ENCODE measurements at regions of chr10 and their contacts with region 1.

Region 1: DNA sequence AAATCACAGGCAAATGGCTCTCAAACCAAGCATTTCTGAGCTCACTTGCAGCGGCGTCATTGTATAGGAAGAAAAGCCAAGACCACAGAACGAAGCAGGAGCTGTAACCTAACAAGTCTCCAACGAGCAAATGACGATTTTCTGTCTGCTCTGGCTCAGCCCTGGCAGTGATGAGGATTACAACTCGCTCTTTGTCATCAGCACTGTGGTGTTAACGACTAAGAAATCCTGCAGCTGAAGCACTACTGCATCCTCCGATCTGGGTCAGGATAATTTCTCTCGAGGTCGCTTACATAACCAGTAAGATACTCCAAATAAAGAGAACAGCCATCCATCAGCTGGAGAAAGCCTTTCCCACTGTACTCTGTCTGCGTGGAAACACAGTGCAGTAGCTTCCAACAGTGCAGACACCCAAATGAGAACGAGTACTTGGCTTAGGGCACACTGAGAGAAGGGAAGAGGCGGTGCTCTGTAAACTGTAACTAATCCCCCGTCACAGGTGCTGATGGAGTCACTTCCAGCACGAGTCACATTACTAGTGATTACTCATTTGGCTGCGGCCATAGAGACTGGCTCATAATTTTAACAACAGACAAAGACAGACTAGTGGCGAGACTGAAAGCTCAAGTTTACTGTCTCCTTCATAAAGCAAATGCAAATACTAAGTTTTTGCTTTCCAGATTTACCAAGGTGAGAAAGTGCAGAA is 135.8 kb downstream of the NRBF2 start:
- DNase-seq: peak; percentile 81
- H3K4me3 Mint-ChIP-seq: peak overlapping the region; percentile 93
- H3K27ac Mint-ChIP-seq: peak overlapping the region; percentile 99
- H3K4me1 Mint-ChIP-seq: peaks cover 26% of the 10 kb centered on the region
- H3K27me3 Mint-ChIP-seq: no peaks in the 10 kb centered on the region
- CTCF ChIP-seq: no peak

Region 2: GRCh38 chr10:63236113-63236935 is 32.6 kb before region 1 on chr10:
- CTCF ChIA-PET with region 1: interaction called, 11 read pairs
- intact Hi-C with region 1: loop called (anchors 2 kb)
- DNase-seq: peak; percentile 39
- H3K4me3 Mint-ChIP-seq: no peak overlapping the region
- H3K27ac Mint-ChIP-seq: peak overlapping the region; percentile 60
- H3K4me1 Mint-ChIP-seq: peaks cover 30% of the 10 kb centered on the region
- H3K27me3 Mint-ChIP-seq: no peaks in the 10 kb centered on the region
- CTCF ChIP-seq: no peak

Region 3: GRCh38 chr10:63409465-63410027 is 140.6 kb after region 1 on chr10:
- CTCF ChIA-PET with region 1: no interaction called
- intact Hi-C with region 1: no loop called
- DNase-seq: no peak
- H3K4me3 Mint-ChIP-seq: no peak overlapping the region
- H3K27ac Mint-ChIP-seq: no peak overlapping the region
- H3K4me1 Mint-ChIP-seq: peaks cover 8% of the 10 kb centered on the region
- H3K27me3 Mint-ChIP-seq: no peaks in the 10 kb centered on the region
- CTCF ChIP-seq: no peak

Region 4: DNA sequence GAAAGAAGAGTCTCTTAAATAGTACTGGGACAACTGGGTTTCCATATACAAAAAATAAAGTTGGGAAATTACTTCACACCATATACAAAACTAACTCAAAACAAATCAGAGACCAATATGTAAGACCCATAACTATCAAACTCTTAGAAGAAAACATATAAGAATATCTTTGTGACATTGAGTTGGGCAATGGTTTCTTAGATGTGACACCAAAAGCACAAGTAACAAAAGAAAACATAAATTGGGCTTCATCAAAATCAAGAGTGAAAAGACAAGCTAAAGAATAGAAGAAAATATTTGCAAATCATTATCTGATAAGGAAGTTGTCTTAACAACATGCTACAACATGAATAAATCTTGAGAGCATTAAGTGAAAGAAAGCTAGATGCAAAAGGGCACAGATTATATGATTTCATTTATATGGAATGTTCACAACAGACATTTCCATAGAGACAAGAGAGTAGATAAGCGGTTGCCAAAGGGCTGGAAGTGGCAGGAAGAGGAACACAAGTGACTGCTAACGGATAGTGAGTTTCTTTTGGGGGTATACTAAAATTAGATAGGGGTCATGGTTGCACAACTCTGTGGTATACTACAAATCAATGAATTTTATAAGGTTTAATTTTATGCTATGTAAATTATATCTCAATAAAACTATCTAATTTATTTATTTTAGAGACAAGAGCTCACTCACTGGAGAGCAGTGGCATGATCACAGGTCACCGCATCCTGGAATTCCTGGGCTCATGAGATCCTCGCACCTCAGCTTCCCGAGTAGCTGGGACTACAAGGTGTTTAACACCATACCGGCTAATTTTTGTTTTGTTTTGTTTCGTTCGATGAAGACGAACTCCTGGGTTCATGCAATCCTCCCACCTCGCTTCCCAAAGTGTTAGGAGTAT is 161.4 kb after region 1 on chr10:
- CTCF ChIA-PET with region 1: no interaction called
- intact Hi-C with region 1: loop called (anchors 10 kb)
- DNase-seq: no peak
- H3K4me3 Mint-ChIP-seq: no peak overlapping the region
- H3K27ac Mint-ChIP-seq: peak overlapping the region; percentile 51
- H3K4me1 Mint-ChIP-seq: peaks cover 55% of the 10 kb centered on the region
- H3K27me3 Mint-ChIP-seq: no peaks in the 10 kb centered on the region
- CTCF ChIP-seq: no peak

Region 5: DNA sequence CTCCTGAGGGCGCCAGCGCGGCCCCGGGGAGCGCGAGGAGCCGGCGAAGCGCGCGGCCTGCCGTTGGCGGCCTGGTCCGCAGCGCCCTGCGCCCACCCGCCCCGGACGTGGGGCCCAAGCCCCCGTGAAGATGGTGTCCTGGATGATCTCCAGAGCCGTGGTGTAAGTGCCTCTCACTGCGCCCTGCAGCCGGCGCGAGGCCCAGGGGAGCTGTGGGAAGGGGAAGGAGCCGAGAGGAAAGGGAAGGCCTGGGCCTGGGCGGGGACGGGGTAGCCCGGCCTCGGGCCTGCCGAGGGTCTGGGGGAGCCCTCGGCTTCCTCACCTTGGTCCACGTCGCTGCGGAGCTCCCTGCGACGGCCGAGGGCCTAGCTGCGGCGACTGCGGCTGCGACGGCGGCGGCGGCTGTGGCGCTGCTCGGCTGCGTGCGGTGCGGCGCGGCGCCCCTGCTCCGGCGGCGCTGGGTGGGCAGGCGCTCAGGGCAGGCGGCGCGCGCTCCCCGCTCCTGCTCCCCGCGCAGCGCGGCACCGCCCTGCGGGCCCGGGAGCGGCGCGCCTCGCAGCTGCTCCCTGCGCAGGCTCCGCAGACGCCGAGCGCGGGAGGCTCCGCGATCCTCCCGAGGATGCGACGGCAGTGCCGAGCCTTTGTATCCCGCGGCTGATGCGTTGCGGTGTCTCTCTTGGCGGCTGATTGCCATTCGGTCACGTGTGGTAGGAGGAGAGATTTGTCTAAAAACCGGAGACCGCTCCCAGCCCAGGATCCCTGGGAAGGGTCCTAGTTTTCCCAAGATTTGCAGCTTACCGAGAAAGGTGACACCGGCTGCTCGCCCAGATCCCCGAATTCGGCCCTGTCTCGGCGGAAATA is 252.7 kb after region 1 on chr10:
- CTCF ChIA-PET with region 1: interaction called, 8 read pairs
- intact Hi-C with region 1: loop called (anchors 5 kb)
- DNase-seq: peak; percentile 66
- H3K4me3 Mint-ChIP-seq: peak overlapping the region; percentile 76
- H3K27ac Mint-ChIP-seq: peak overlapping the region; percentile 86
- H3K4me1 Mint-ChIP-seq: peaks cover 50% of the 10 kb centered on the region
- H3K27me3 Mint-ChIP-seq: no peaks in the 10 kb centered on the region
- CTCF ChIP-seq: no peak

Region 6: DNA sequence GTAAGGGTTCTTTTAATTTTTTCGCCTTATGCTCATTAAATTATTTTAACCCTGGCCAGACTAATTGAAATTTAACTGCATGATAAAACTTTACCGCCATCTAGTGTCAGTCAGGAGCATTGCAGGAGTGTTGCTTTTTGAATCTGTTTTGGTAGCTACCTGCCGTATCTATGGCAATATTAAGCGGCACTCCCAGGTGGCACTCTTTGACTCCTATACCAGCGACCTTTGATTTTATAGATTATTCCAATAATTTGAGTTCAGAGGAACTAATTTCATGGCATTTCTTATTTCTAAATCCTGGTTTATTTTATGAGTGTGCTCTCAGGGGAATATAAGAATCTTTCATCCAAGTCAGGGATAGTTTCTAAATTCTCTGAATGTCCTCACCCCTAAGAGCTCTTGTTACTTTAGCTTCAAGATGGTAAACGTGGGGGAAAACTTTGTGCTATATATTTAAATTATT is 451.2 kb after region 1 on chr10:
- CTCF ChIA-PET with region 1: interaction called, 11 read pairs
- intact Hi-C with region 1: no loop called
- DNase-seq: peak; percentile 68
- H3K4me3 Mint-ChIP-seq: no peak overlapping the region
- H3K27ac Mint-ChIP-seq: no peak overlapping the region
- H3K4me1 Mint-ChIP-seq: peaks cover 29% of the 10 kb centered on the region
- H3K27me3 Mint-ChIP-seq: peaks cover 2% of the 10 kb centered on the region
- CTCF ChIP-seq: peak; percentile 94

Measured in Calu3 (cell line).